ENCODE measurements at regions of chr2 and their contacts with region 1.

Region 1: DNA sequence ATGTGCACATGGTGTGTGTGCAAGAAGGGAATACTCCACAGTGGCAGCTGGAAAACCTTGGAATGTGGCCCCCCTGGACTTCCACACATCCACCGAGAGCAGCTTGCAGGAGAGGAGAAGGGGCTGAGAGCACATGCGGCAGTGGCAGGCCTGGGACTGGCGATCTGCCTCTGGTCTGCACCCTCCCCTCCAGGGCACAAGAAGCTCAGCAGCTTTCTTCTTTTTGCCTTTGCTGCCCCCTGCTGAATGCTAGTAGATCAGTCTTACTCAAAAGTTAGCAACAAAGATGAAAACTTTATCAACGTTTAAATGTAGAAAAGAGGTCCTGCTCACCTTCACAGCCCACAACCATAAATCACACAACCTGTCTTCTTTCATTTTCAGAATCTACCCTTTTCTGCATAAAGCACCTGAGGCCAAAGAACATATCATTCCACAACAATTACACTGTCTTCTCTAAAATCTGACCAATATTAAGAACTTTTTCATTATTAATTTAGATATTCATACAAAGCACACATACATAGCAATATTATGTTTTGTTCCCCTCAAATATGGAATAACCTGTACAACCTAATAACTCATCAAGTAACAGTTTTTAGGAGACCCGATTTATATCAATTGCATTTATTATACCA is 34.6 kb downstream of the TGFBRAP1 start:
- DNase-seq: peak; percentile 63
- H3K4me3 ChIP-seq: no peak overlapping the region
- H3K27ac ChIP-seq: peak overlapping the region; percentile 26
- H3K4me1 ChIP-seq: peaks cover 26% of the 10 kb centered on the region
- H3K27me3 ChIP-seq: no peaks in the 10 kb centered on the region
- CTCF ChIP-seq: peak; percentile 51 to 75

Region 2: GRCh38 chr2:105114551-105114950 is 180.4 kb before region 1 on chr2:
- CTCF ChIA-PET with region 1: interaction called, 4 read pairs
- dilution Hi-C with region 1: no loop called
- in situ Hi-C with region 1: no loop called
- intact Hi-C with region 1: loop called (anchors 1 kb)
- DNase-seq: peak; percentile 14
- H3K4me3 ChIP-seq: no peak overlapping the region
- H3K27ac ChIP-seq: no peak overlapping the region
- H3K4me1 ChIP-seq: no peaks in the 10 kb centered on the region
- H3K27me3 ChIP-seq: no peaks in the 10 kb centered on the region
- CTCF ChIP-seq: peak; percentile 64 to 73

Region 3: DNA sequence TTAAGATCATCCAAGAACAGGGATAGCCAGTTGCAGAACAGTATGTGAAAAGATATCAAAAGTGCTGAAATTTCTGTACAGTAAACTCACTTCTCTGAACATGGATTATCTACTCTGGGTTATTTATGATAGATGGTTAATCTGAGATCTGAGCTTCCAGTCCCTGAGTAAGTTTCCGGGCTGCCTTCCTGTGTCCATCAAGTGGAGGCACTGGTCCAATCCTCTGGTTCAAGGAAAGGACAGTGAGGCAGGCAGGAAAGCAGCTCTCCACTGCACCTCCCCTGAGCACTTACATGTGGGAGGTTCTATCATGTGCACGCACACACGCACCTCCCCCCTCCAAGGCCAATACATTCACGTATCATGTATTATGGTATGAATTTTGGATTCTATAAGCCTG is 20.9 kb before region 1 on chr2:
- CTCF ChIA-PET with region 1: interaction called, 10 read pairs
- dilution Hi-C with region 1: no loop called
- in situ Hi-C with region 1: no loop called
- intact Hi-C with region 1: no loop called
- DNase-seq: no peak
- H3K4me3 ChIP-seq: no peak overlapping the region
- H3K27ac ChIP-seq: no peak overlapping the region
- H3K4me1 ChIP-seq: no peaks in the 10 kb centered on the region
- H3K27me3 ChIP-seq: no peaks in the 10 kb centered on the region
- CTCF ChIP-seq: no peak

Region 4: GRCh38 chr2:105329561-105330495 is 34.9 kb after region 1 on chr2 and contains the start of gene TGFBRAP1:
- CTCF ChIA-PET with region 1: interaction called, 3 read pairs
- dilution Hi-C with region 1: no loop called
- in situ Hi-C with region 1: no loop called
- intact Hi-C with region 1: loop called (anchors 2 kb)
- DNase-seq: peak; percentile 27
- H3K4me3 ChIP-seq: peak within 1 kb of the TSS; percentile 47 to 65 (median 63)
- H3K27ac ChIP-seq: peak within 1 kb of the TSS; percentile 68
- H3K4me1 ChIP-seq: peaks cover 31% of the 10 kb centered on the region
- H3K27me3 ChIP-seq: no peaks in the 10 kb centered on the region
- CTCF ChIP-seq: no peak
- total RNA-seq, gene TGFBRAP1: 24.6 to 44.8 TPM

Region 5: DNA sequence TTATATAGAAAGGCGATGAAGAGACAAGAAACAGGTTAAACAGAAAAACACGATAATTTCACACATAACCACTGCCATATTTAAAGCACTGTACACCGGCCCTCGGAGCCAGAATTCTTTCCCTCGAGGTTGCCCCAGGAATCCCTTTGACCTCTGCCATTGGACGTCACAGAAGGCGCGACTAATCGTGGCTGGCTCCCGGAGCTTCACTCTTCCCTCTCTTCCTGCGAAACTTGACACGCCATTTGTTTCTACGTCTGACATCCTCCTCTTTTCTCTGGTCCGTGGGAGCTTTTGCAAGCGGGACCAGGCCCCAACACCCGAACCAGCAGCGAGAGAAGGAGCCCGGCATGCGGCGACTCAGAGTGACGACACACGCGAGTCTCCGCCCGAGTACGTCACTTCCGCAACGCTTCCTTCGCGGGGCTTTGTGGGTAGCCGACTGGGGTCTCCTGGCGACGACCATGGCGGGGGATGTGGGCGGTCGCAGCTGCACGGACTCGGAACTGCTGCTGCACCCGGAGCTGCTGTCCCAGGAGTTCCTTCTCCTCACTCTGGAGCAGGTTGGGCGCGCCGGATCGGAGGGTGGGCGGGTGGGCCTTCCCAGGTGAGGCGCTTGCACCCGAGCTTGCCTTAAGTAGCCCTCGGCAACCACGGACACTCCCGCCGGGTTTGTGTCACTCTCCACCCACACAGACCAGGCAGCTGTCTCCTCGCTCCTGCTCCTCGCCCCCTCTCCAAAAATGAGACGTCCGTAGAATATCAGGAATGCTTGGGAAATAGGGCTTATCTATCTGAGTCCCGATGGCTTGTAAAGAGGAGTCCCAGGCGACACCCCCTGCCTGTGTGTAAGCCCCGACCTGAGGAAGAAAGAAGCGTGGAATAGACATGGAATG is 42.4 kb after region 1 on chr2 and contains the start of gene C2orf49:
- CTCF ChIA-PET with region 1: no interaction called
- dilution Hi-C with region 1: no loop called
- in situ Hi-C with region 1: no loop called
- intact Hi-C with region 1: loop called (anchors 1 kb)
- DNase-seq: peak; percentile 82
- H3K4me3 ChIP-seq: peak within 1 kb of the TSS; percentile 69 to 97 (median 89)
- H3K27ac ChIP-seq: peak within 1 kb of the TSS; percentile 100
- H3K4me1 ChIP-seq: peaks cover 15% of the 10 kb centered on the region
- H3K27me3 ChIP-seq: no peaks in the 10 kb centered on the region
- CTCF ChIP-seq: no peak
- total RNA-seq, gene C2orf49: 16.5 TPM